ENCODE measurements at regions of chr10 and their contacts with region 1.

Region 1: GRCh38 chr10:53886325-53887300 is 914.4 kb downstream of the PCDH15 start:
- DNase-seq: no peak
- ATAC-seq: no peak
- H3K4me3 ChIP-seq: no peak overlapping the region
- H3K27ac ChIP-seq: no peak overlapping the region
- H3K4me1 ChIP-seq: no peaks in the 10 kb centered on the region
- H3K27me3 ChIP-seq: no peaks in the 10 kb centered on the region
- CTCF ChIP-seq: no peak

Region 2: GRCh38 chr10:52297747-52298146 is 1588.9 kb before region 1 on chr10:
- intact Hi-C with region 1: no loop called
- DNase-seq: no peak
- ATAC-seq: no peak
- H3K4me3 ChIP-seq: no peak overlapping the region
- H3K27ac ChIP-seq: no peak overlapping the region
- H3K4me1 ChIP-seq: no peaks in the 10 kb centered on the region
- H3K27me3 ChIP-seq: no peaks in the 10 kb centered on the region
- CTCF ChIP-seq: no peak

Region 3: DNA sequence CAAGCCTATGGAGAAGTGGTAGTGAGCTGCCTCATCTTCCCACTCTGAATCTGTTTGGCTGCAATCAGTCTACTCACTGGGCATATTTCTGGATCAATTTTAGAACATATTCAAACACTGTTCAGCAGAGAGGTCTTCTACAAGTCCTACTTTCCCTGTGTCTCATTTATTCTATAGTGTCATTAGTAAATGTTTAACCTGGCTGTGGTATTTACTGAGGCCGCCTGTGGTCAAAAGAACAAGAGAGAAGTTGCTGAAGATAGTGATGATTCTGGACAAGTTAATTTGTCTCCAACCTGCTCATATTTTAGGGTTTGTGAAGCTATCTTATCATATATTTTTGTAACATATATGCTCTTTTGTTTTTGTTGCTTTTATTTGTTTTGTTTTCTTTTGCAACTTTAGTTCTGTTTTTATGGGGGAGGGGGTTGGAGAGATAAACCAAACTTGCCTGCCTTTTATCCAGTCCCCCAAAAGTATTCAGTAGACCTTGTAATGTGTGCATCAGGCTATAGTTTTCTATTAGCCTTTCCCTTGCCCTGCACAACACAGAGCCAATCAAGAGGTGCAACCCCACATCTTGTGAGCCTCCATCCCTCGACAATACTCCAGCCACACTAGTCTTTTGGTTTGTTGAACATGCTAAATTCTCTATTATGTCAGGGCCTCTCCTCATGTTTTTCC is 751.3 kb before region 1 on chr10:
- intact Hi-C with region 1: loop called in 1 of 10 experiments (anchors 5 kb)
- DNase-seq: no peak
- ATAC-seq: no peak
- H3K4me3 ChIP-seq: no peak overlapping the region
- H3K27ac ChIP-seq: no peak overlapping the region
- H3K4me1 ChIP-seq: no peaks in the 10 kb centered on the region
- H3K27me3 ChIP-seq: no peaks in the 10 kb centered on the region
- CTCF ChIP-seq: no peak

Region 4: DNA sequence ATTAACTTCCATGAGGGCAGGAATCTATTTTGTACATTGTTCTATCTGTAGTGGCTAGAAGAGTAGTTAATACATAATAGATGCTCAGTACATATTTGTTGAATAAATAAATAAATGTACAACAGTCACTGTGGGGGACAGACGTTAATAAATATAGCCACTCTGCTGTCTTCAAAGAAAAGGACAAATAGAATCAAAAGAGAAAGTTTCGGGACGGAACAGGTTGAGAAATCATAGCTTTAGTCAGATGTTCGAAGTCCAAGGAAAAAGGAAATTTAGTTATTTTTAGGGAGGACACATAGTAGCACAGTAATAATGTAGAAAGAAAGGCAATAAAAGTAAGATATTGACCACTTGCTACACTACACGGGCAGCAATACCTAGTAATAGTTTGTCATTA is 53.0 kb after region 1 on chr10:
- intact Hi-C with region 1: no loop called
- DNase-seq: no peak
- ATAC-seq: no peak
- H3K4me3 ChIP-seq: no peak overlapping the region
- H3K27ac ChIP-seq: no peak overlapping the region
- H3K4me1 ChIP-seq: no peaks in the 10 kb centered on the region
- H3K27me3 ChIP-seq: no peaks in the 10 kb centered on the region
- CTCF ChIP-seq: no peak